ENCODE measurements at regions of chr7 and their contacts with region 1.

Region 1: GRCh38 chr7:151519765-151520418 is at the start of gene RHEB:
- DNase-seq: peak; percentile 96 to 99
- H3K4me3 ChIP-seq: peak within 1 kb of the TSS; percentile 86 to 98
- H3K27ac ChIP-seq: peak within 1 kb of the TSS; percentile 98 to 100
- H3K4me1 ChIP-seq: peaks cover 0 to 16% of the 10 kb centered on the region in 2 donors
- H3K27me3 ChIP-seq: no peaks in the 10 kb centered on the region
- CTCF ChIP-seq: no peak
- total RNA-seq, gene RHEB: 68.6 TPM

Region 2: DNA sequence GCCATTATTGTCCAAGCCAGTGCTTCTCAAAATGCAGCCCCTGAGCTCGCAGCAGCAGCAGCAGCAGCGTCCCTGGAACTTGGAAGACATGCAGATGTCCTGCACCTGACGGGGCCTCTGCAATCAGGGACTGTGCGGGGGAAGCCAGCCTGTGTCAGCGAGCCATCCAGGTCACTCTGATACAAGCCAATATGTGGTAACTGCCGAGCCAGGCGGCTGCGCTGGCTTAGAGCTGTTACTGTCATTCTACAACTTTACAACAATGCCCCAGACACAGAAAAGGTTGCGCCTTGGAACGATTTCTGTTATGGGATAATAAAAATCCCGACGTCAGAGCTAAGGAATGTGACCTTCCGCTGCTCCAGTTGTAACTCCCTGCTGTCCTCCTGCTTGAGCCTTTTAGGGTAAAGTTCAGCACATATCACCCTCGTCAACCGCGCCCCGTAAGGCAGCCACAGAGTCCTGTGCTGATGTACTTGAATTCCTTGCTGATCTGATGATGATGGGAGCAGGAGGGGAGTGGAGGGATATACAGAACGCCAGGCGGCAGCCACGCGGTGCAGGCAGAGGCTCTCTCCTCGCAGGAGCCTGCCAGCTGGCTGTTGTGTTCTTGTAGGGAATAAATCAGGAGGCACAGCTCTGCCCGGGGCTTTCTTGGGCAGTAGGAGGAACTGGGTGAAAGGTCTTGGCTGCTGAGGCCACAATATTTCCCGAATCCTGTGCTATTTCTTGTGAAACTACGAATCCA is 60.0 kb before region 1 on chr7:
- intact Hi-C with region 1: loop called (anchors 2 kb)
- DNase-seq: peak; percentile 52 to 95
- H3K4me3 ChIP-seq: peak overlapping the region; percentile 7 to 52
- H3K27ac ChIP-seq: peak overlapping the region; percentile 87 to 93
- H3K4me1 ChIP-seq: peaks cover 7 to 22% of the 10 kb centered on the region in 2 donors
- H3K27me3 ChIP-seq: no peaks in the 10 kb centered on the region
- CTCF ChIP-seq: peak; percentile 29 to 47 (median 35)

Region 3: GRCh38 chr7:151498495-151498894 is 21.4 kb before region 1 on chr7:
- intact Hi-C with region 1: no loop called
- DNase-seq: no peak
- H3K4me3 ChIP-seq: no peak overlapping the region
- H3K27ac ChIP-seq: no peak overlapping the region
- H3K4me1 ChIP-seq: peaks cover 0 to 19% of the 10 kb centered on the region in 2 donors
- H3K27me3 ChIP-seq: no peaks in the 10 kb centered on the region
- CTCF ChIP-seq: no peak

Region 4: GRCh38 chr7:151592868-151593486 is 73.1 kb after region 1 on chr7:
- intact Hi-C with region 1: loop called (anchors 5 kb)
- DNase-seq: no peak
- H3K4me3 ChIP-seq: no peak overlapping the region
- H3K27ac ChIP-seq: peak overlapping the region in 1 of 2 donors; percentile 29
- H3K4me1 ChIP-seq: peaks cover 0 to 12% of the 10 kb centered on the region in 2 donors
- H3K27me3 ChIP-seq: no peaks in the 10 kb centered on the region
- CTCF ChIP-seq: no peak

Region 5: DNA sequence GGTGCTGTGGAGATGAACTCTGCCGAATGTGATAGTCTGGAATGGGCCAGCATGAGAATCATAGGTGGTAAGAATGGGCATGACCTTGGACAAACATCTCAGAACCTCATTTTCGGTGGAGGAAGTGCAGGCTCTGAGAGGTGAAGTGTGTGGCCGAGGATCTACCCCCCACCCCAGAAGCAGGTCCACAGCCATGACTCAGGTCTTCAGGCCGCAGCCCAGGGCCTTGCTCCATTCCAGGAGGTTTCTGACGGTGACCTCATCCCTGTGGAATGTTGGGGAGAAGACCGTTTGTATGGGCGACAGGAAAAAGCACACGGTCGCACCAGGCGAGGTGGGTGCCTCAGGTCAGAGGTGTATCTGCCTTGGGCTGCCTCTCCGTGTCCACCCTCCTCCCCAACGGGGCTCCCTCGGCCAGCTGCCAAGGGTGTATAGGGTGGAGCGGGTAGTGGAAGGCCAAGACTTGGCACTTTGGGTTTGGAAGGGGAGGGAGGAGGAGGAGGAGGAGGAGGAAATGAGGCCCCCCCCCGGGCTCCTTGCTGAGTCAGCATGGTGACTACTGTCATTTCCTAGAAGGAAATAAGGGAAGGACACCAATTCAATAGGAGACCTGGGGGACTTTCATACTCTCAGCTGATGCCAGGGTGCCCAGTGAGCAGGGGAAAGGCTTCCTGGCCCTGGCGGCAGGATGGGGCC is 167.8 kb after region 1 on chr7:
- intact Hi-C with region 1: loop called (anchors 5 kb)
- DNase-seq: peak; percentile 35 to 94
- H3K4me3 ChIP-seq: no peak overlapping the region
- H3K27ac ChIP-seq: peak overlapping the region; percentile 86 to 94
- H3K4me1 ChIP-seq: peaks cover 10 to 28% of the 10 kb centered on the region in 2 donors
- H3K27me3 ChIP-seq: no peaks in the 10 kb centered on the region
- CTCF ChIP-seq: peak in 1 of 3 experiments; percentile 7

Region 6: DNA sequence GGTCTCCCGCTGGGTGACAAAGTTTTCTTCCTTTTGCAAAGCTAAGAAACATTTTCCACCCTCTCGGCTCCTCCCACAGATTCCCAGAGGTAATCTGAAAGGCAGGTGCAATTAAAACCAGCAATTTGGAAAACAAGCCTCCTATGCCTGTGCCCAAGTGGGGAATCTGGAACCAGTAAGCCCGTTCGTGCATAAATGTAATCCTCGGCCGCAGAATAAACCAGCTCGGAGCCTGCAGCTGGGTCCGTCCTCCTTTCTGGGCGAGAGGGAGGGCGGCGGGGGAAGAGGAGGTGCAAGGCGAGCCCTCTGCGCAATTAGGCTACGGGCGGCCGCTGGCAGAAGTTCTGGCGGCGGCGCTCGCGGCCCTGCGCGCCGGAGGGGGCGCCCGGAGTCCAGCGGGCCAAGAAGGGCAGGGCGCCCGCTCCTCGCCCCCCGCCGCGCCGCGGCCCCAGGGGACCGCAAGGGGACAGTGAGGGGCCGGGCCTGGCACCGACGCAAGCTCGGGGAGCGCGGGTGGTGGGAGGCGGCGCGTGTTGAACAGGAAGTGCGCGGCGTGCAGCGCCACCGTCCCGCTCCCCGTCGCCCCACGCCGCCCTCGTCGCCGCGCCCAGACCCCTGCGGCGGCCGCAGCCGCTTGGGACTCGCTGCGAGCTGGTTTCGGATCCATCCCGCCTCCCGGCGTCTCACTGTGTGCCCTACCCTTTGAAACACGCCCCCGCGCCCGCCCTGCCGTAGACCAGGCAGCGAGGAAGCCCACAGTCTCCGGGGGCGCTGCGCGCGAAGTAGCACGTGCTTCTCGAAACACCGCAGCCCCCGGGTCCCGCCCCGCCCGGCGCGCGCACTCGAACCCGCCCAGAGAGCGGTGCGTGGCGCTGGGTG is 357.2 kb after region 1 on chr7 and contains the start of gene PRKAG2:
- intact Hi-C with region 1: loop called (anchors 10 kb)
- DNase-seq: peak in 1 of 2 donors; percentile 87
- H3K4me3 ChIP-seq: peak within 1 kb of the TSS; percentile 93 to 95
- H3K27ac ChIP-seq: peak within 1 kb of the TSS; percentile 76 to 78
- H3K4me1 ChIP-seq: peaks cover 5 to 18% of the 10 kb centered on the region in 2 donors
- H3K27me3 ChIP-seq: no peaks in the 10 kb centered on the region
- CTCF ChIP-seq: peak in 1 of 3 experiments; percentile 3
- total RNA-seq, gene PRKAG2: 26.7 TPM